Body of pancreas (tissue), 4 donors: ENCODE measurements at regions of chr5 and their contacts with region 1.

Region 1: GRCh38 chr5:64775291-64775690 is 6.6 kb downstream of the CWC27 start:
- DNase-seq: no peak
- ATAC-seq: no peak
- H3K4me3 ChIP-seq: no peak overlapping the region
- H3K27ac ChIP-seq: no peak overlapping the region
- H3K4me1 ChIP-seq: peaks cover under 1% of the 10 kb centered on the region
- H3K27me3 ChIP-seq: no peaks in the 10 kb centered on the region
- CTCF ChIP-seq: no peak
- POLR2A ChIP-seq: no peak

Region 2: GRCh38 chr5:64644831-64645230 is 130.5 kb before region 1 on chr5:
- intact Hi-C with region 1: loop called (anchors 5 kb)
- DNase-seq: no peak
- ATAC-seq: no peak
- H3K4me3 ChIP-seq: no peak overlapping the region
- H3K27ac ChIP-seq: no peak overlapping the region
- H3K4me1 ChIP-seq: no peaks in the 10 kb centered on the region
- H3K27me3 ChIP-seq: no peaks in the 10 kb centered on the region
- CTCF ChIP-seq: no peak
- POLR2A ChIP-seq: no peak